ENCODE measurements at regions of chr19 and their contacts with region 1.

Region 1: GRCh38 chr19:3572132-3572854 is 451 bp upstream of the HMG20B start:
- DNase-seq: peak; percentile 98 to 100 (median 99)
- ATAC-seq: peak; percentile 95
- H3K4me3 ChIP-seq: peak overlapping the region; percentile 57
- H3K4me3 Mint-ChIP-seq: peak overlapping the region; percentile 86
- H3K27ac ChIP-seq: peak overlapping the region in 1 of 2 donors; percentile 13
- H3K27ac Mint-ChIP-seq: peak overlapping the region; percentile 31
- H3K4me1 ChIP-seq: peaks cover 18% of the 10 kb centered on the region
- H3K4me1 Mint-ChIP-seq: peaks cover 16% of the 10 kb centered on the region
- H3K27me3 ChIP-seq: no peaks in the 10 kb centered on the region
- H3K27me3 Mint-ChIP-seq: no peaks in the 10 kb centered on the region
- CTCF ChIP-seq: no peak

Region 2: GRCh38 chr19:3434712-3435553 is 137.4 kb before region 1 on chr19:
- CTCF ChIA-PET with region 1: no interaction called
- POLR2A ChIA-PET with region 1: no interaction called
- intact Hi-C with region 1: loop called in 1 of 2 experiments (anchors 5 kb)
- DNase-seq: peak; percentile 88 to 97 (median 94)
- ATAC-seq: peak; percentile 94
- H3K4me3 ChIP-seq: peak overlapping the region; percentile 79
- H3K4me3 Mint-ChIP-seq: peak overlapping the region; percentile 97
- H3K27ac ChIP-seq: peak overlapping the region; percentile 92 to 94
- H3K27ac Mint-ChIP-seq: peak overlapping the region; percentile 95
- H3K4me1 ChIP-seq: peaks cover 17% of the 10 kb centered on the region
- H3K4me1 Mint-ChIP-seq: peaks cover 17% of the 10 kb centered on the region
- H3K27me3 ChIP-seq: no peaks in the 10 kb centered on the region
- H3K27me3 Mint-ChIP-seq: no peaks in the 10 kb centered on the region
- CTCF ChIP-seq: no peak

Region 3: GRCh38 chr19:3505598-3506383 is 66.5 kb before region 1 on chr19 and contains the start of gene FZR1:
- CTCF ChIA-PET with region 1: no interaction called
- POLR2A ChIA-PET with region 1: no interaction called
- intact Hi-C with region 1: loop called in 1 of 2 experiments (anchors 5 kb)
- DNase-seq: peak; percentile 98 to 100 (median 100)
- ATAC-seq: peak; percentile 85
- H3K4me3 ChIP-seq: peak within 1 kb of the TSS; percentile 91
- H3K4me3 Mint-ChIP-seq: peak within 1 kb of the TSS; percentile 95
- H3K27ac ChIP-seq: peak within 1 kb of the TSS; percentile 85 to 96
- H3K27ac Mint-ChIP-seq: peak within 1 kb of the TSS; percentile 95
- H3K4me1 ChIP-seq: peaks cover 53% of the 10 kb centered on the region
- H3K4me1 Mint-ChIP-seq: peaks cover 48% of the 10 kb centered on the region
- H3K27me3 ChIP-seq: no peaks in the 10 kb centered on the region
- H3K27me3 Mint-ChIP-seq: no peaks in the 10 kb centered on the region
- CTCF ChIP-seq: no peak
- total RNA-seq, gene FZR1: 109 to 116 TPM

Region 4: DNA sequence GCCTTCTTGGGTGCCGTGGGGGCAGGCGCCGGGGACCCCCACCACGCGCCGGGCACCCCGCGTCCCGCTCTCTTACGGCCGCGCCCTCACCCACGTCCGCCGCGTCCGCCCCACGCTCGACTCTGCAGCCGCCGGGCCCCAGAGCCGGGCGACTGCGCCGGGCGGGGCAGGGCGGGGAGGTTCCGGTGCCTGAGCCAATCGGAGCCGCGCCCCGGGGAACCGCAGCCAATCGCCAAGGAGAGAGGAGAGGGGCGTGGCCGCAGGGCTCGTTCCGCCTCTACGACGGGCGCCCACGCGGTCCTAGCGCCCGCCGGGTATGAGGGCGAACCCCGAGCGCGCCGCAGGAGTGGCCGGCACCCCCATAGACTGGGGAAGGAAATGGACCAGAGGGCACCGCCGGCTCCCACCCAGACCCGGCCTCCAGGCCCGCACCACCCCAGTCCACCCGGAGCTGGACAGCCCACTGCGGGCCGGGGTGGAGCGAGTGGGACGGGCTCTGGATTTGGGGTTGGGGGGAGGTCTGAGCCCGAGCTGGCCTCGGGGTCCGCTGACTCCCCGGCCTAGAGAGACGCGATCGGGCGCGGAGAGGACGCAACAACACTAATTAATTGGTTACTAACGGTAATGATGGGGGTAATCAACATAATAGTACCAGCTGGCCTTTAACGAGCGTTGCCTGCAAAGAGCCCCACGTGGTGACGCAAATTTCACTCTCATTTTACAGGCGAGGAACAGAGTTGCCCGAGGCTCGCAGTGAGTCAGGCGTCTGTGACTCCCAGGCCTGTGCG is 14.6 kb before region 1 on chr19 and contains the start of gene MFSD12:
- CTCF ChIA-PET with region 1: interaction called, 4 read pairs
- POLR2A ChIA-PET with region 1: interaction called, 8 read pairs
- intact Hi-C with region 1: loop called (anchors 1 kb)
- DNase-seq: peak; percentile 87 to 97 (median 94)
- ATAC-seq: peak; percentile 77
- H3K4me3 ChIP-seq: peak within 1 kb of the TSS; percentile 84
- H3K4me3 Mint-ChIP-seq: peak within 1 kb of the TSS; percentile 93
- H3K27ac ChIP-seq: peak within 1 kb of the TSS; percentile 45 to 71
- H3K27ac Mint-ChIP-seq: peak within 1 kb of the TSS; percentile 93
- H3K4me1 ChIP-seq: peaks cover 54% of the 10 kb centered on the region
- H3K4me1 Mint-ChIP-seq: peaks cover 33% of the 10 kb centered on the region
- H3K27me3 ChIP-seq: no peaks in the 10 kb centered on the region
- H3K27me3 Mint-ChIP-seq: no peaks in the 10 kb centered on the region
- CTCF ChIP-seq: no peak
- total RNA-seq, gene MFSD12: 62.5 to 65.0 TPM

Region 5: DNA sequence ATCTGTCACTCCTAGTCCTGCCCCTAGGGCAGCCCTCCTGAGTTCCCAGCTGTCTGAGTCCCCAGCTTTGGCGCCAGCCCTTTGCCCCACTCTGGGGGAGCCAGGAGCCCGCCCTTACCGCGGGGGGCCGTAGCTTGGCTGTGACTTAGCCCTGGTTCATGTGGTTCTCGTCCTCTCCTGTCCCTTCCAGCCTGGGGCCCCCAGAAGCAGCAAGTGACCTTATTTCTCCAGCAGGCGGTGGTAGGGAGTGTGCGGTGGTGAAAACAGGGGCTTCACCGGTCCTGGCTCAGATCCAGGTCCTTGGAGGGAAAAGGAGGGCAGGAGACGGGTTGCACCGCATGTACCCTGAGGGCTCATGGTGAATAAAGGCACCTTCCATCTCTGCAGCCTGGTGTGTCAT is 20.9 kb after region 1 on chr19:
- CTCF ChIA-PET with region 1: no interaction called
- POLR2A ChIA-PET with region 1: no interaction called
- intact Hi-C with region 1: no loop called
- DNase-seq: no peak
- ATAC-seq: no peak
- H3K4me3 ChIP-seq: no peak overlapping the region
- H3K4me3 Mint-ChIP-seq: no peak overlapping the region
- H3K27ac ChIP-seq: no peak overlapping the region
- H3K27ac Mint-ChIP-seq: no peak overlapping the region
- H3K4me1 ChIP-seq: no peaks in the 10 kb centered on the region
- H3K4me1 Mint-ChIP-seq: no peaks in the 10 kb centered on the region
- H3K27me3 ChIP-seq: no peaks in the 10 kb centered on the region
- H3K27me3 Mint-ChIP-seq: no peaks in the 10 kb centered on the region
- CTCF ChIP-seq: no peak

Region 6: GRCh38 chr19:3626473-3627350 is 54.4 kb after region 1 on chr19 and contains the start of gene CACTIN:
- CTCF ChIA-PET with region 1: no interaction called
- POLR2A ChIA-PET with region 1: no interaction called
- intact Hi-C with region 1: loop called in 1 of 2 experiments (anchors 2 kb)
- DNase-seq: peak; percentile 97 to 99 (median 98)
- ATAC-seq: peak; percentile 97
- H3K4me3 ChIP-seq: peak within 1 kb of the TSS; percentile 85
- H3K4me3 Mint-ChIP-seq: peak within 1 kb of the TSS; percentile 92
- H3K27ac ChIP-seq: peak within 1 kb of the TSS; percentile 83 to 98
- H3K27ac Mint-ChIP-seq: peak within 1 kb of the TSS; percentile 94
- H3K4me1 ChIP-seq: peaks cover 35% of the 10 kb centered on the region
- H3K4me1 Mint-ChIP-seq: peaks cover 21% of the 10 kb centered on the region
- H3K27me3 ChIP-seq: no peaks in the 10 kb centered on the region
- H3K27me3 Mint-ChIP-seq: no peaks in the 10 kb centered on the region
- CTCF ChIP-seq: no peak
- total RNA-seq, gene CACTIN: 25.8 to 25.9 TPM

Region 7: GRCh38 chr19:3700221-3701032 is 128.1 kb after region 1 on chr19 and contains the start of gene PIP5K1C:
- CTCF ChIA-PET with region 1: no interaction called
- POLR2A ChIA-PET with region 1: no interaction called
- intact Hi-C with region 1: no loop called
- DNase-seq: peak; percentile 84 to 97 (median 92)
- ATAC-seq: peak; percentile 99
- H3K4me3 ChIP-seq: peak within 1 kb of the TSS; percentile 72
- H3K4me3 Mint-ChIP-seq: peak within 1 kb of the TSS; percentile 91
- H3K27ac ChIP-seq: no peak within 1 kb of the TSS
- H3K27ac Mint-ChIP-seq: peak within 1 kb of the TSS; percentile 73
- H3K4me1 ChIP-seq: peaks cover 37% of the 10 kb centered on the region
- H3K4me1 Mint-ChIP-seq: peaks cover 27% of the 10 kb centered on the region
- H3K27me3 ChIP-seq: peaks cover 0 to 2% of the 10 kb centered on the region in 2 experiments
- H3K27me3 Mint-ChIP-seq: no peaks in the 10 kb centered on the region
- CTCF ChIP-seq: peak; percentile 73
- total RNA-seq, gene PIP5K1C: 14.7 to 15.5 TPM